A673 (cell line): ENCODE measurements at regions of chr5 and their contacts with region 1.

Region 1: GRCh38 chr5:101942321-101943215 is 353.5 kb downstream of the SLCO4C1 start:
- DNase-seq: peak; percentile 61
- H3K4me3 ChIP-seq: no peak overlapping the region
- H3K27ac ChIP-seq: no peak overlapping the region
- H3K4me1 ChIP-seq: no peaks in the 10 kb centered on the region
- H3K27me3 ChIP-seq: no peaks in the 10 kb centered on the region
- CTCF ChIP-seq: peak; percentile 69

Region 2: DNA sequence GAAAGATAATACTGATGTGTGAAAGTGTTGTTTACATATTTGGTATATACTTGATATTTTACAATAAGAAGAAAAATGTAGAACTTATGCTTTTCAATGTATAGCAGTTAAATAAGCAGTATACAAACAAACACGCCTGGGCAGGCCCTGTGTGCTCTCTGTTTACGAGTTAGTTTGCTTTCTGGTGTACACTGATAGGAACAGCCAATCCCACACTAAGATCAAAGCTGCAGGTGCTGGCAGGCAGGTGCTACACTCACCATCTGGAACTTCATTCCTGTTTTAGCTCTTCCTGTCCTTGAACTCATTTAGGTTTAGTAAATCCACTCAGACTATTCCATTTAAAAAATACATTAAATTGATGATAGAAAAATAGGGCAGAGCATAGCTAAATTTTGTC is 424.8 kb before region 1 on chr5:
- CTCF ChIA-PET with region 1: no interaction called
- POLR2A ChIA-PET with region 1: no interaction called
- intact Hi-C with region 1: no loop called
- DNase-seq: no peak
- H3K4me3 ChIP-seq: no peak overlapping the region
- H3K27ac ChIP-seq: no peak overlapping the region
- H3K4me1 ChIP-seq: no peaks in the 10 kb centered on the region
- H3K27me3 ChIP-seq: no peaks in the 10 kb centered on the region
- CTCF ChIP-seq: no peak

Region 3: DNA sequence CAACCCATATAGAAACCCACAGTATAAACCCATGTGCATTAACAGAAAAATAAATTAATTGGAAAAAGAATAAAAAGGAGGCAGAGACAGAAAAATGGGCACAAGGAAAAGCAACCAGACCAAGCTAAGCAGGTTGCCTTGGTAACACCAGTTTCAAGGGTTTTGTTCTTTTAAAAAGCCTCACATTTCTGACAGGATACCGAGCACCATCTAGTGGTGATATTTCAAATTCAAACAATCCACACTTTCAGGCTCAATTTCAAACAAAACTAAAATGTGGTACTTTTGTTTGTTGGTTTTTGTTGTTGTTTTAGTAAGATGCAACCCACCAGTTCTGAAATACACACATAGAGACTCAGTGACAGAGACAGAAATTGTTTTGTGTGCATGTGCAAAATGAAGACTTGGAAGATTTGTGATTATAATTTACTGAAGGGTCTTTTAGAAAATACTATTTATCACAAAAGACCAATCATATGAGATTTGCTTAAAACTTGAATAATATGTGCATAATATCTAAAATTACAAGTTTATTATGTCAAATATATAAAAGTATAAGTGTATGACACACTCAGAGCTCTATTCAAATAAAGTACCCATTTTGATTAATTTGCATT is 35.3 kb after region 1 on chr5:
- CTCF ChIA-PET with region 1: interaction called, 6 read pairs
- POLR2A ChIA-PET with region 1: no interaction called
- intact Hi-C with region 1: loop called (anchors 1 kb)
- DNase-seq: peak; percentile 72
- H3K4me3 ChIP-seq: no peak overlapping the region
- H3K27ac ChIP-seq: no peak overlapping the region
- H3K4me1 ChIP-seq: no peaks in the 10 kb centered on the region
- H3K27me3 ChIP-seq: peaks cover 29% of the 10 kb centered on the region
- CTCF ChIP-seq: peak; percentile 74

Region 4: GRCh38 chr5:102090770-102091381 is 148.3 kb after region 1 on chr5:
- CTCF ChIA-PET with region 1: no interaction called
- POLR2A ChIA-PET with region 1: no interaction called
- intact Hi-C with region 1: loop called (anchors 2 kb)
- DNase-seq: peak; percentile 58
- H3K4me3 ChIP-seq: no peak overlapping the region
- H3K27ac ChIP-seq: no peak overlapping the region
- H3K4me1 ChIP-seq: no peaks in the 10 kb centered on the region
- H3K27me3 ChIP-seq: peaks cover 17% of the 10 kb centered on the region
- CTCF ChIP-seq: peak; percentile 61

Region 5: GRCh38 chr5:102153003-102153759 is 210.6 kb after region 1 on chr5:
- CTCF ChIA-PET with region 1: no interaction called
- POLR2A ChIA-PET with region 1: no interaction called
- intact Hi-C with region 1: loop called (anchors 5 kb)
- DNase-seq: peak; percentile 43
- H3K4me3 ChIP-seq: no peak overlapping the region
- H3K27ac ChIP-seq: no peak overlapping the region
- H3K4me1 ChIP-seq: no peaks in the 10 kb centered on the region
- H3K27me3 ChIP-seq: no peaks in the 10 kb centered on the region
- CTCF ChIP-seq: peak; percentile 63

Region 6: GRCh38 chr5:102223542-102224477 is 281.2 kb after region 1 on chr5:
- CTCF ChIA-PET with region 1: no interaction called
- POLR2A ChIA-PET with region 1: no interaction called
- intact Hi-C with region 1: loop called (anchors 2 kb)
- DNase-seq: peak; percentile 63
- H3K4me3 ChIP-seq: no peak overlapping the region
- H3K27ac ChIP-seq: no peak overlapping the region
- H3K4me1 ChIP-seq: no peaks in the 10 kb centered on the region
- H3K27me3 ChIP-seq: peaks cover 34% of the 10 kb centered on the region
- CTCF ChIP-seq: peak; percentile 76